ENCODE measurements at regions of chr15 and their contacts with region 1.

Region 1: DNA sequence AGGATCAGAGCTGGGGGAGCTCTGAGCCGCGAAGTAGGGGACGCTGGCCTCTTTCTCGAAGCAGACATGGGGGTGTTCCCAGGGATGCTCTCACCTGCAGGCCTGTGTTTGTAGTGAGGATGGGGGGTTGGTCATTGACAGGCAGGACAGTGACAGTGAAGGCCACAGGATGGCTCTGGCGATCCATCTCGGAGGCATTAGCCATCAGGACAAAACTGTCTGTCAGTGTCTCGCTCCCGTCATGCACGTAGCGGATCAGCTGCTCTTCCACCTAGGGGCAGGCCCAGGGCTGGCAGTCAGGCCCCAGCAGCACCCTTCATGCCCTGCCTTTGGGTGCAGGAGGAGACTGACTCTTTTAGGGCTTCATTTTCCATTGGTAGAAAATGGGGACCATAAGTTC is 28.0 kb downstream of the CSPG4 start:
- DNase-seq: no peak
- ATAC-seq: no peak
- H3K4me3 ChIP-seq: no peak overlapping the region
- H3K4me3 Mint-ChIP-seq: no peak overlapping the region
- H3K27ac ChIP-seq: no peak overlapping the region
- H3K27ac Mint-ChIP-seq: no peak overlapping the region
- H3K4me1 ChIP-seq: peaks cover 5% of the 10 kb centered on the region
- H3K4me1 Mint-ChIP-seq: no peaks in the 10 kb centered on the region
- H3K27me3 ChIP-seq: no peaks in the 10 kb centered on the region
- H3K27me3 Mint-ChIP-seq: no peaks in the 10 kb centered on the region
- CTCF ChIP-seq: no peak

Region 2: DNA sequence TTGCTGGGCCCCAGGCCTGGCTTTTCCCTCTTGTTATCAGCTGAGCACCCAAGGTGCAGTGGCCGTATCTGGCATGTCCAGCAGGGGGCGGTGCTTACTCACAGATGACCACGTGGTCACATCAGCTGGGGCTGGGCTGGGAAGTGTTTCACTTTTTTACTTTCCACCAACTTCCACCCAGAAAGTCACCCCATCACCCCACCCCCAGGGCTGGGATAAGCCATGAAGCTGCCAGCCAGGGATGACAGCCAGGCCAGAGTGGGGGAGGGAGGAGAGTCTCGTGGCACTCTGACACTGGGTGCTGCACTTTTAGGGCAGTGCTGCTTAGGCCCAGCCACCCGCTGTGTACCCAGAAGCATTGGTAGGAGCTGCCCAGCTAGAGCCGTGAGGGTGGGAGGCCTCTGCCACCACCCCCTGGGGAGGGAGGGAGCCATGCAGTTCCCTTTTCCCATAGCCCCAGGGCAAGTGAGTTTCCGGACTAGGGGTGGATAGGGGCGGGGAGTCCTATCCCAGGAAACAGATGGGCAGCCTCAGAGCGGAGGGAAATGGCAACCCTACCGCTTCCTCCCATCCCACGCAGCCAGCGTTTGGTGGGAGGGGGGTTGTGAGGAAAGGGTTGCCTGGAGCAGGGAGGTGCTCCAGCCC is 655.1 kb before region 1 on chr15:
- CTCF ChIA-PET with region 1: no interaction called
- POLR2A ChIA-PET with region 1: no interaction called
- intact Hi-C with region 1: loop called in 1 of 2 experiments (anchors 2 kb)
- DNase-seq: peak; percentile 79 to 94 (median 86)
- ATAC-seq: peak; percentile 97
- H3K4me3 ChIP-seq: no peak overlapping the region
- H3K4me3 Mint-ChIP-seq: peak overlapping the region; percentile 49
- H3K27ac ChIP-seq: no peak overlapping the region
- H3K27ac Mint-ChIP-seq: peak overlapping the region; percentile 31
- H3K4me1 ChIP-seq: peaks cover 24% of the 10 kb centered on the region
- H3K4me1 Mint-ChIP-seq: peaks cover 17% of the 10 kb centered on the region
- H3K27me3 ChIP-seq: no peaks in the 10 kb centered on the region
- H3K27me3 Mint-ChIP-seq: no peaks in the 10 kb centered on the region
- CTCF ChIP-seq: peak; percentile 93

Region 3: DNA sequence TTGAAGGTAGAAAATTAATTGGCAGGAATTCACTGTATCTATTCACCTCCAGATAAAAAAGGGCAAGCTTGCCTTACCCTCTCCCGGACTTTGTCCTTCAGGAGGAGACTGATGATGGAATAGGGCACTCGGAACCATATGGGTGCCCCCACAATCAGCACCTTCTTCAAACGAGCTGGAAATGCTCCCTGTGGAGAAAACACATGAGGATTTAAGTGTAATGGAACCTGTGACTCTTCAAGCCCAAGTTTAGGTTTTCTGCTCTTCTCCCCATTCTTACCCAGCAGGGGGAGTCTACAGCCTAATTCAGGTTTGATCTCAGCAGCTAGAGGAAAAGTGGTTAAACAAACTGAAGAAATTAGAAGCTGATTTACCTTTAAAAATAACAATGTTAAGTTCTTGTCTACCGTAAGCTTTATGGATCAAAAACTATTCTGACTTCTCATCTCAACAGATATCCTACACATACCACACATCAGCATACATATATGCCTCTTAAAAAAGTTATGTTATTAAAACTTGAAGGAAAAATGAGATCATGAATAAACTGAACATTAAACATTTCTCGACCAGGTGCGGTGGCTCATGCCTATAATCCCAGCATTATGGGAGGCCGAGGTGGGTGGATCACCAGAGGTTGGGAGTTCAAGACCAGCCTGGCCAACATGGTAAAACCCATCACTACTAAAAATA is 175.7 kb before region 1 on chr15:
- CTCF ChIA-PET with region 1: interaction called, 4 read pairs
- POLR2A ChIA-PET with region 1: no interaction called
- intact Hi-C with region 1: loop called in 1 of 2 experiments (anchors 1 kb)
- DNase-seq: peak in 6 of 14 experiments; percentile 15 to 64 (median 48)
- ATAC-seq: peak; percentile 34
- H3K4me3 ChIP-seq: no peak overlapping the region
- H3K4me3 Mint-ChIP-seq: no peak overlapping the region
- H3K27ac ChIP-seq: no peak overlapping the region
- H3K27ac Mint-ChIP-seq: peak overlapping the region; percentile 13
- H3K4me1 ChIP-seq: no peaks in the 10 kb centered on the region
- H3K4me1 Mint-ChIP-seq: no peaks in the 10 kb centered on the region
- H3K27me3 ChIP-seq: no peaks in the 10 kb centered on the region
- H3K27me3 Mint-ChIP-seq: no peaks in the 10 kb centered on the region
- CTCF ChIP-seq: peak; percentile 60

Region 4: GRCh38 chr15:75801859-75802593 is 117.4 kb after region 1 on chr15:
- CTCF ChIA-PET with region 1: interaction called, 4 read pairs
- POLR2A ChIA-PET with region 1: no interaction called
- intact Hi-C with region 1: loop called in 1 of 2 experiments (anchors 5 kb)
- DNase-seq: peak; percentile 67 to 87 (median 74)
- ATAC-seq: peak; percentile 100
- H3K4me3 ChIP-seq: no peak overlapping the region
- H3K4me3 Mint-ChIP-seq: no peak overlapping the region
- H3K27ac ChIP-seq: no peak overlapping the region
- H3K27ac Mint-ChIP-seq: no peak overlapping the region
- H3K4me1 ChIP-seq: peaks cover 7% of the 10 kb centered on the region
- H3K4me1 Mint-ChIP-seq: peaks cover 4% of the 10 kb centered on the region
- H3K27me3 ChIP-seq: peaks cover 10 to 11% of the 10 kb centered on the region in 2 experiments
- H3K27me3 Mint-ChIP-seq: peaks cover 47% of the 10 kb centered on the region
- CTCF ChIP-seq: peak; percentile 81

Measured in CD4-positive, alpha-beta T cell (primary cell).